IMR-90 (cell line): ENCODE measurements at regions of chr13 and their contacts with region 1.

Region 1: GRCh38 chr13:108306860-108307259 is 37.3 kb downstream of the TNFSF13B start:
- DNase-seq: no peak
- ATAC-seq: no peak
- H3K4me3 ChIP-seq: no peak overlapping the region
- H3K27ac ChIP-seq: no peak overlapping the region
- H3K4me1 ChIP-seq: no peaks in the 10 kb centered on the region
- H3K27me3 ChIP-seq: no peaks in the 10 kb centered on the region; the same call in 1 of the 2 replicates
- CTCF ChIP-seq: no peak
- POLR2A ChIP-seq: no peak
- RAD21 ChIP-seq: no peak

Region 2: GRCh38 chr13:106996867-106997618 is 1309.8 kb before region 1 on chr13:
- CTCF ChIA-PET with region 1: no interaction called
- POLR2A ChIA-PET with region 1: no interaction called
- dilution Hi-C with region 1: no loop called
- in situ Hi-C with region 1: no loop called
- intact Hi-C with region 1: no loop called
- DNase-seq: peak; percentile 47
- ATAC-seq: peak; percentile 75
- H3K4me3 ChIP-seq: no peak overlapping the region
- H3K27ac ChIP-seq: no peak overlapping the region
- H3K4me1 ChIP-seq: peaks cover 2% of the 10 kb centered on the region; the same call in 1 of the 2 replicates
- H3K27me3 ChIP-seq: no peaks in the 10 kb centered on the region
- CTCF ChIP-seq: no peak
- POLR2A ChIP-seq: no peak
- RAD21 ChIP-seq: no peak

Region 3: DNA sequence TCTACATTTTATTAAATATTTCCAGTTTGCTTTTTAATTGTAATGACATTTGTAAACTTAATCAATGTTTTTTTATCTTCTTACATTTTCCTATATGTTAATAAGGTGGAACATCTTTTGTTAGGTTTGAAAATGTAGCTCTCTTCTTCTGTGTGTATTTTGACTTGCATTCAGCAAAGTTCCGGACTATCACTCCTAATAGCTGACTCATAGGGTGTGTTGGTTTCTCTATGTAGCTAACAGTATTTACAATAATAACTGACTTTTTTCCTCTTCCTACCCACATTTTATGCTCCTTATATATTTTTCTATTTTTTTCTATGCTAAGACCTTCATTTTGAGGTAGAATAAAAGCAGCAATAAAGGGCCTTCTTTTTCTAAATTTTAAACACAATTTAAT is 350.7 kb after region 1 on chr13:
- CTCF ChIA-PET with region 1: no interaction called
- POLR2A ChIA-PET with region 1: interaction called, 16 read pairs
- dilution Hi-C with region 1: no loop called
- in situ Hi-C with region 1: no loop called
- intact Hi-C with region 1: no loop called
- DNase-seq: no peak
- ATAC-seq: no peak
- H3K4me3 ChIP-seq: no peak overlapping the region
- H3K27ac ChIP-seq: no peak overlapping the region
- H3K4me1 ChIP-seq: no peaks in the 10 kb centered on the region
- H3K27me3 ChIP-seq: no peaks in the 10 kb centered on the region
- CTCF ChIP-seq: no peak
- POLR2A ChIP-seq: no peak
- RAD21 ChIP-seq: no peak